ENCODE measurements at regions of chr12 and their contacts with region 1.

Region 1: DNA sequence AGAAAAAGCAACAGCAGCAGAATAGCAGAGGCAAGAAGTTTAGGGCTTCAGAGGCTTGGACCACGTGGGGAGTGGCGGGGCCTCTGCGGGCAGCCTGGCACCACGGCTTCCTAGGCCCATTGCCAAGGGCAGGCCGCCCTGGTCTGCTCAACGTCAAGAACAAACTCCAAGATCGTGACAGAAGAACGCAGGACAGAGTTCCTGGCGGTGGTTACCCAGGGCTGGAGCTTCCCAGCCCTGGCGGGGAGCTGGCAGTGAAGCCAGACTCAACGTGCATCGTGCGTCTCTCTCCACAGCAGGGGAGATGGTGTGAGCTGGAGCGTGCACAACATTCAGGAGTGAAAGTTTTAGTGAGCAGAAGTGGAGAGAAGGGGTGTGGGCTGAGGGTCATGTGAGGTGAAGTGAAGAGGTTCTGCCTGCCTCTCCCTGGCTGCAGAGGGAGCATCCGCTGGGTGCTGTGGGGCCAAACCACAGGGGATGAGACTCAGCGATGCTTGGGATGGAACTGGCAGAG is 13.9 kb upstream of the CACNA2D4 start:
- DNase-seq: peak; percentile 76
- H3K4me3 ChIP-seq: no peak overlapping the region
- H3K27ac ChIP-seq: no peak overlapping the region
- H3K4me1 ChIP-seq: no peaks in the 10 kb centered on the region
- H3K27me3 ChIP-seq: no peaks in the 10 kb centered on the region
- CTCF ChIP-seq: no peak

Region 2: DNA sequence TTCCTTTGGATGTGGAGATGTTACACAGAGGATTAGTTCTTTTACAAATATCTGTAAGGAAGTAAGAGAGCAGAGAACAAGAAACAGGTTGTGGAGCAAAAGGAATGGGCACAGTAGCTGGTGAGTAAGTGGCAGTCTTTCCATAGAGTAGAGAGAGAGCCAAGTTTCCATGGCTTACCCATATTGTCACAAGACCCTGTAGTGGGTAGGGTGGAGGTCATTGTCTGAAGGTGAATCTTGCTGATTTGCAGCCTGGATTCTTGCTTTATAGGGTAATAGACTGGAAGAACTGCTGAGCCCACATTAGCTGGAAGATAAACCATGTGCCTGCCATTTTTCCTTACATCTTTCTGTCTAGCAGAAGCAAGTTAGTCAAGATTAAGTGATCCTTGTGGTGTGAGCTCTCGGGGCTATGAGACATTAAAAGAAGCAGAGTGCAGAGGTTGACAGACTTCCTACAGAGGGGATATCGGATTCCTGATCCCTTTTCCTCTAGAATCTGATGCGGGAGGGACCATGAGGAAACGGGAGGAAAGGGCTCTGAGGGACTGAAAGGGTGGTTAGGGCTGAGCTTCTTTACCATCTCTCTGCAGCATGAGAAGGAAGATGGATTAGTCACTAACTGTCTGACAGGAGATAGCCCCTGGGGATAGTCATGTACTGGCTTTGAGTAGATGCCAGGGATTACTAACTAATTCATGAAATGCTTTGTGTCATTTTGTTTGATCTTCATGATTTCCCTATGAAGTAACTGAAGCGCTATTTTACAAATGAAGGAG is 156.0 kb before region 1 on chr12:
- intact Hi-C with region 1: no loop called
- DNase-seq: no peak
- H3K4me3 ChIP-seq: no peak overlapping the region
- H3K27ac ChIP-seq: no peak overlapping the region
- H3K4me1 ChIP-seq: no peaks in the 10 kb centered on the region
- H3K27me3 ChIP-seq: no peaks in the 10 kb centered on the region
- CTCF ChIP-seq: no peak

Region 3: GRCh38 chr12:1804545-1805332 is 127.6 kb before region 1 on chr12:
- intact Hi-C with region 1: loop called (anchors 5 kb)
- DNase-seq: peak; percentile 93
- H3K4me3 ChIP-seq: no peak overlapping the region
- H3K27ac ChIP-seq: no peak overlapping the region
- H3K4me1 ChIP-seq: no peaks in the 10 kb centered on the region
- H3K27me3 ChIP-seq: no peaks in the 10 kb centered on the region
- CTCF ChIP-seq: no peak

Region 4: DNA sequence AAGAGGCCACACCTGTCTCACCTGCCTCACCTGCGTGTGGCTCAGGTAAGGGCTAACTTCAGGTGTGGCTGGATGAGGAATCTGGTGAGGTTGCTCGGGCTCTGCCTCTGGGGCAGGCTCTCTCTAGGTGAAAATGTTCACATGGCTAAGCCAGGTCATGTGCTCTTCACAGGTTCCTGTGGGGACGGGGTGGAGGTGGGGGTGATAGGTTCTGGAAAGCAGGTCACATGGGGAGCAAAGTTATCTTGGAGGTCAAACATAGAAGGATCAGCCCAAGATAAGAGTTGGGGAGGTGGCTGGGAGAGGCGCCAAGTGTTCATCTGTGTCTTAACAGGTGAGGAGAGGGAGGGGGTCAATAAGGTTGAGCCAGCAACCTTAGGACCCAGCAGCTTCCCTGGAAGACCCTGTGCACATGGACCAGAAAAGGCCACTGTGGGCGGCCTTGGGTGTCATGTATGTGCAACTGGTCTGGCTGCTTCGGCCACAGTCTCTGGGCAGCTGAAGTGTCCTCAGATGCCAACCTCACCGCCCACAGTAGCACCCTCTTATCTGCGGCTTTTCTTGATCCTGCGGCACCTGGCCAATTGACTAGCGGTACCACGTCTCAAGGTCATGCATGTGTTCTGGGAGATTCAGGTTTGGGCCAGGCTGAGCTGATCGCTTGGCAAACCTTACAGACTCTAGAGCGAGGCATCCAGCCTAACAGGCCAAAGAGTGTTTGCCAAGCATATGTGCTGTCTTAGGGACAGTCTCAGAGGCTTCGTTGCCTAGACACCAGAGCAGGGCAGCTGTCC is 181.0 kb after region 1 on chr12:
- intact Hi-C with region 1: no loop called
- DNase-seq: no peak
- H3K4me3 ChIP-seq: no peak overlapping the region
- H3K27ac ChIP-seq: no peak overlapping the region
- H3K4me1 ChIP-seq: no peaks in the 10 kb centered on the region
- H3K27me3 ChIP-seq: no peaks in the 10 kb centered on the region
- CTCF ChIP-seq: no peak

Measured in colonic mucosa (tissue), 4 donors.